ENCODE measurements at regions of chr3 and their contacts with region 1.

Region 1: DNA sequence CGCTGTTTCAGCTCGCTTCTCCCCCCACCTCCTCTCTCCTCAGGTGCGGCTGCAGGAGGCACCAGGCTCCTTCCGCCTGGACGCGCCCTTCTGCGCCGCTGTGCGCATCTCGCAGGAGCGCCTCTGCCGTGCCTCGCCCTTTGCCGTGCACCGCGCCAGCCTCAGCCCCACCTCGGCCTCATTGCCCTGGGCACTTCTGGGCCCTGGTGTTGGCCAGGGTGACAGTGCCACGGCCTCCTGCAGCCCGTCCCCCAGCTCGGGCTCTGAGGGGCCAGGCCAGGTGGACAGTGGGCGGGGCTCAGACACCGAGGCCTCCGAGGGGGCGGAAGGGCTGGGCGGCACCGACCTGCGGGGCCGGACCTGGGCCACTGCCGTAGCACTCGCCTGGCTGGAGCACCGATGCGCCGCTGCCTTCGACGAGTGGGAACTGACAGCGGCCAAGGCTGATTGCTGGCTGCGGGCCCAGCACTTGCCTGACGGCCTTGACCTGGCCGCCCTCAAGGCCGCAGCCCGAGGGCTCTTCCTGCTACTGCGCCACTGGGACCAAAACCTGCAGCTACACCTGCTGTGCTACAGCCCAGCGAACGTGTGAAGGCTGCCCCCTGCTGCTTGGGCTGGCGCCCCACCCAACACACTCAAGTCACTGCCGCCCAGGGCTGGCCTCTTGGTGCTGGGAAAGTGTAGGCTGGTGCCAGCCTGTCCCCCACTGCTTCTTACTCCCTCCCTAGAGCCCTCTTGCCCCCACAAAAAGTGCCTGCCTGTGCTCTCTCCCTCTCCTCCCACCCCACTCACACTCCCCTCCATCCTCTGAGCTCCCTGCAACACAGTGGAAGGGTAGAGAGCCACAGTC is 7.1 kb downstream of the ALG3 start:
- DNase-seq: peak; percentile 70
- H3K27ac ChIP-seq: peak overlapping the region; percentile 47
- CTCF ChIP-seq: peak; percentile 61

Region 2: GRCh38 chr3:184145111-184145524 is 96.6 kb before region 1 on chr3:
- CTCF ChIA-PET with region 1: interaction called, 40 read pairs
- POLR2A ChIA-PET with region 1: no interaction called
- DNase-seq: peak; percentile 82
- H3K27ac ChIP-seq: peak overlapping the region; percentile 54
- CTCF ChIP-seq: peak; percentile 54

Region 3: DNA sequence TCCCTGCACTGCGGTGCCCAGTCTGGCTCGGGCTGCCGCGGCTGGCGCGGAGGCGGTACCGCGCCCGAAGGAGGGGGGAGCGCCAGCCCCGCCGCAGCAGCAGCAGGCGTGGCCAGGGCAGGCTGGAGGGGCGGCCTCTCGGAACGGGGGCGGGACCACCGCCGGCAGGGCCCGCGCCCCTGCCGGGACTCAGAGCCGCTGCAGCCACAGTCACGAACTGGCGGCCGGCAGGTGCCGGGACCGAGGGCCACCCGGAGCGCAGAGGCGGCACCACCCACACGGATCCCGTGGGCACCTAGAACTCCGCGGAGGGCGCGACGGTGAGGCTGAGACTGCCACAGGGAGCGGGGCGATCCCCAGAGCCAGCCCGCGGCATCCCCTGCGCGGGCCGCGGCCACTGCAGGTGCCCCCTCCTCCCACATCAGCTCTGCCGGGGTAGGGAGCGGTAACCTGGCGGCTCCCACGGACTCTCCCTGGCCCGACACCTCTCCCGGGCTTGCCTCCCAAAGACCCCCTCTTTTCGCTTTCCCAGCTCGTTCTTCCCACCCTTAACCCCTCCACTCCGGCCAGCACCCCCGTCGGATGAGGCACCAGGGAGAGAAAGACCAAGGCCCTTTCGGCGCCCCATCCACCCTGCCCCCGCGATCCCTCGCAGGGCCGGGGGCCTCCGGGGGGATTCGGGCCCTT is 12.1 kb before region 1 on chr3 and contains the start of gene VWA5B2:
- CTCF ChIA-PET with region 1: interaction called, 32 read pairs
- POLR2A ChIA-PET with region 1: no interaction called
- DNase-seq: peak; percentile 66
- H3K27ac ChIP-seq: no peak within 1 kb of the TSS
- CTCF ChIP-seq: 0 out of 2 replicates have a peak, but pooled peaks have one; percentile 17